ENCODE measurements at regions of chr15 and their contacts with region 1.

Region 1: DNA sequence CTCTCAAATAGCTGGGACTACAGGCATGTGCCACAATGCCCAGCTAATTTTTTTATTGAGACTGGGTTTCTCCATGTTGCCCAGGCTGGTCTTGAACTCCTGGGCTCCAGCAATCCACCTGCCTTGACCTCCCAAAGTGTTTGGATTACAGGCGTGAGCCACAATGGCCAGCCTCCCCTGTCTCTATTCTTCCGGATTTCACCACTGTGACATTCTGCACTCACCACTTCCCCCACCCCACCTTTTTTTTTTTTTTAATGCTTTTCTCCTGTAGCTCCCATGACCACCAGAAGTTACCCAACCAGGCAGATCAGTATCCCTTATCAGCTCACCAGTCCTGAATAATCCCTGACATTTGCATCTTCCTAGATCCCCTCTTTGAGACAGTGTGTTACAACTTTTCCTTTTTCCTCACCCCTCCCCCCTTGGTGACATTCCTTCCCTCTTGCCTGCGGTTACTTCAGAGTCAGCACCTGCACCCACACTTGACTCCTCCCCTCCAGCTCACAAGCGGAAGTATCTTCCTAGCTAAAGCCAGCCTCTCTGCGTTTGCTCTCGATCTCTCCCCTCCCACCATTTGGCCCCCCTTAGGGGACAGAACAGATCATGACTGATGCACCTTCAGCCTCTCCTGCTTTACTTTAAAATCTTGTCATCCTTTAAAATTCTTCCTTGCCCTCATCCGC is 13.5 kb upstream of the ZNF592 start:
- DNase-seq: no peak
- H3K4me3 ChIP-seq: no peak overlapping the region; the same call in 1 of the 2 replicates
- CTCF ChIP-seq: no peak

Region 2: GRCh38 chr15:84716036-84716799 is 18.7 kb before region 1 on chr15 and contains the start of gene SEC11A:
- CTCF ChIA-PET with region 1: interaction called, 7 read pairs
- POLR2A ChIA-PET with region 1: interaction called, 10 read pairs
- DNase-seq: no peak
- H3K4me3 ChIP-seq: peak within 1 kb of the TSS; percentile 97
- CTCF ChIP-seq: no peak

Measured in AG04449 (cell line).